Right ventricle myocardium inferior (tissue), 1 donor: ENCODE measurements at regions of chr7 and their contacts with region 1.

Region 1: DNA sequence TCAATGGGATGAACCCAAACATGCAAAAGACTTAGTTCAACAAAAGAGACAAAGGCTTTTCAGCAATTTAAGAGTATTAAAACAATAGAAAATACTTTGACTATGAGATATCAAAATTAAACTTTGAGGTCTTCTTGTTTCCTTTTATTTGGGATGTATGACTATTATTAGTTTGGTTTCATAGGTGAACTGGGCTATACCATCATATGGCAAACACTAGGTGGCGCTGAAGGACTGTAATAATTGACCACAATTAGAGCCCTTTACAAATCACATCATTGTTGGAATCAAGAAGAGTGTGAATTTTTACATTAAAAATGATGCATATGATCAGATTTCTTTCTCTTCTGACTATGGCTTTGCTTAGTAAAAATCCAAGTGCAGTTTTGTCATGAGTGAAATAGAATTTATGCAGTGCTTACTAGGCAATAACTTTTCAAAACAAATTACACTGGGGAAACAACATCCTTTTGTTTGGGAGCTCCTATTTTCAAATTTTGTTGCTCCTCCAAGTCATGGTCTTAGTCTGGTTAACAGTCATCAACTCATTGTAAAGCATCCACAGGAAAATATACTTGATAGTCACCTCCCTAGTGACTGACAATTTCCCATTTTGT is 14.7 kb upstream of the NXPH1 start:
- DNase-seq: no peak
- ATAC-seq: no peak

Region 2: DNA sequence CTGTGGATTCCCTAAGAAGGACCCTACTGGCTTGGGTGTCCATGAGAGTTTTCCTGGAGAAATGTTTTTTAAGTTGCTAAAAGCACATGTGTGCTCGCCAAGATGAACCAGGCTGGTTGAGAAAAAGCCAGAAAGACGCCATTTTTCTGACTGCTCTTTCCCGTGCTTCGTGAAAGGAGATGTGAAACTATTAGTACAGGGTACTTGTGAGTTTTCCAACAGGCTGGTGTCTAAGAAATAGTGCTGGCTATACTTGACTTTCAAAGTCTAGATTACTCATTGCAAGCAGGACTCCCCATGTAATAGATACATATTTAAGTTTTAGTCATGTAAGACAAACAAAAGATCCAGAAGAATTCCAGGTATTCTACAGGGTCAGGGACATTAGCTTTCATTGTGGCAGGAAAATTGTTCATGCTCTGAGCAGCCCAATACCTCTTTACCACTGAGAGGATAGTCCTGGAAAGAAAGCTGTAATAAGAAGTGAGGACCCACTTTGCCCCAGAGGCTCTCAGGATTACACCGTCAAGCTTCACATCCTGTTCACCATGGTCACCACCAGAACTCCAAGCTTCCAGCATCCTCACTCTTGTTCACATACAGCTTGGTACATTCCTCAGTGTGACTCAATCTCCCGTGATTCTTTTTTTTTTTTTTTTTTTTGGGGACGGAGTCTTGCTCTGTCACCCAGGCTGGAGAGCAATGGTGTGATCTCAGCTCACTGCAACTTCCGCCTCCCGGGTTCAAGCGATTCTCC is 112.9 kb before region 1 on chr7:
- intact Hi-C with region 1: no loop called
- DNase-seq: no peak
- ATAC-seq: no peak

Region 3: DNA sequence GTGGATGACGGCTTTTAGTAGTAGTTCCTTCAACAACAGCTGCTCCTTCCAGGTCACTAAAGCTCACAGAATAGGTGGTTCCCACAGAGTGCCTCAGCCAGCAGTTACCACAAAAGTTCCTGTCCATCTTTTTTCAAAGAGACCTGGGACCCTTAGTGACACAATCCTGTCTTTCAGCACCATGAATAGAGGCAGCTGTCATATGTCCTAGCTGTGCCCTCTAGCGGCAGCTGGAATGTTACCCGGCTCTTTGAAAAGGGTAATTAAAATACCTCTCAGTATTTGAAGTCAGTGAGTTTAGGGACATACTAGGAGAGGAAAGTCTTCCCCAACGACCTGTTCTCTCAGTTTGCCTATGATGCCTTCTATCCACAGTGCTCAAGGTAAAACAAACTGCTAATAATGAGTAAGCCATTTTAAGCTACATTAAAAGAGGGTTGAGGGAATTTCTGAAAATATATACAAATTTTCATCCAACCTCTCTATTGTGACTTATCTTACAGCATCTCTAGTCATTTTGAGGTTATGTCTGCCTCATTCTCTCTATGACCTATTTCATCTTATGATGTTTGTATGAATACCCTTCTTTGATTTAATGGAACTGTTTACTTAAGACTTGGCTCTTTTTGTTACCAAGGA is 305.5 kb after region 1 on chr7:
- intact Hi-C with region 1: loop called (anchors 10 kb)
- DNase-seq: no peak
- ATAC-seq: no peak

Region 4: GRCh38 chr7:10412422-10413019 is 1993.8 kb after region 1 on chr7:
- intact Hi-C with region 1: loop called (anchors 10 kb)
- DNase-seq: no peak
- ATAC-seq: no peak